Activated CD4-positive, alpha-beta T cell treated with anti-CD3 and anti-CD28 coated beads, Interleukin-2, amount 10 ng/mL, durations not matched to agents 24 days and 14 days (primary cell): ENCODE measurements at regions of chr5 and their contacts with region 1.

Region 1: GRCh38 chr5:156920042-156920860 is 42.8 kb downstream of the TIMD4 start:
- DNase-seq: peak; percentile 90
- H3K4me3 Mint-ChIP-seq: peak overlapping the region; percentile 87
- H3K27ac Mint-ChIP-seq: peak overlapping the region; percentile 96
- H3K4me1 Mint-ChIP-seq: peaks cover 61% of the 10 kb centered on the region
- H3K27me3 Mint-ChIP-seq: no peaks in the 10 kb centered on the region

Region 2: GRCh38 chr5:156402387-156402921 is 517.8 kb before region 1 on chr5:
- intact Hi-C with region 1: loop called (anchors 1 kb)
- DNase-seq: peak; percentile 82
- H3K4me3 Mint-ChIP-seq: peak overlapping the region; percentile 60
- H3K27ac Mint-ChIP-seq: peak overlapping the region; percentile 78
- H3K4me1 Mint-ChIP-seq: peaks cover 8% of the 10 kb centered on the region
- H3K27me3 Mint-ChIP-seq: peaks cover 8% of the 10 kb centered on the region

Region 3: GRCh38 chr5:156947796-156948324 is 27.6 kb after region 1 on chr5:
- intact Hi-C with region 1: loop called (anchors 1 kb)
- DNase-seq: peak; percentile 84
- H3K4me3 Mint-ChIP-seq: peak overlapping the region; percentile 11
- H3K27ac Mint-ChIP-seq: peak overlapping the region; percentile 76
- H3K4me1 Mint-ChIP-seq: peaks cover 35% of the 10 kb centered on the region
- H3K27me3 Mint-ChIP-seq: no peaks in the 10 kb centered on the region

Region 4: DNA sequence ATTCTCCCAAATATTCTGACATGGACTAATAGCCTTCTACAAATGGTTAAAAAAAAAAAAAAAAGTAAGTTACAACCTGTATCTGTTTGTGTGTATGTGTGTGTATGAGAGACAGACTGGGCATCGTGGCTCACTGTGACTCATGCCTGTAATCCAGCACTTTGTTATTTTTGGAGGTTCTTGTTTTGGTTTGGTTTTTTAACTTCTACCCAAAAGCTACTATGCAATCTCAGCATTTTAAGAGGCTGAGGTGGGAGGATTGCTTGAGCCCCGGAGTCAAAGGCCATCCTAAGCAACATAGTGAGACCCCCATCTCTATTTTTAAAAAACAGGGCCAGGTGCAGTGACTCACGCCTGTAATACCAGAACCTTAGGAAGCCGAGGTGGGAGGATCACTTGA is 156.3 kb after region 1 on chr5:
- intact Hi-C with region 1: loop called (anchors 1 kb)
- DNase-seq: peak; percentile 62
- H3K4me3 Mint-ChIP-seq: no peak overlapping the region
- H3K27ac Mint-ChIP-seq: peak overlapping the region; percentile 59
- H3K4me1 Mint-ChIP-seq: peaks cover 45% of the 10 kb centered on the region
- H3K27me3 Mint-ChIP-seq: no peaks in the 10 kb centered on the region

Region 5: GRCh38 chr5:157130925-157131324 is 210.7 kb after region 1 on chr5:
- intact Hi-C with region 1: loop called (anchors 2 kb)
- DNase-seq: peak; percentile 53
- H3K4me3 Mint-ChIP-seq: no peak overlapping the region
- H3K27ac Mint-ChIP-seq: no peak overlapping the region
- H3K4me1 Mint-ChIP-seq: peaks cover 35% of the 10 kb centered on the region
- H3K27me3 Mint-ChIP-seq: no peaks in the 10 kb centered on the region

Region 6: DNA sequence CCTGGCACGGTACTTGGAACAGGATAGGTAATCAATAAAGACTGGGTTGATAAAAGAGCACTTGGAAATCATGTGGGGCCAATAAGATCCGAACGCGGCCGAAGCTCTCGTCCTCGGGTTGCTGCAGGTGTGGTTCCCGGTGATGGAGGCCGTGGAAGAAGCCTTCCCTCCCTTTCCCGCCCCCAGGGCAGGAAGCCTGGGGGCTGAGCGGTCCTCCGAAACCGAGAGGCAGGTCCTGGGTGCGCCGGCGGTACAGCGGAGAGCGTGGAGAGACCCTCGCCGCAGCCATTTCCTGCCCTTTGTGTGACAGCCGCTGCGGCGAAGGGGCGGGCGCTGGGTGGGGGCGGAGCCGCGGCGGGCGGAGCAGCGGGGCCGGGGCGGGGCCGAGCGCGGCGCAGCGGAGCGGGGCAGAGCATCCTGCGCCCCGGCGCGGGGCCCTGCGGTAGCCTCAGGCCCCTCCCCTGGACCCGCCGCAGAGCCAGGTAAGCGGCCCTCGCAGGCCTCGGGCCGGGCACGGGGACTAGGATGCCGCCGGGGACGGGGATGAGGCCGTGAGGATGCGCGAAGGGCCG is 345.5 kb after region 1 on chr5 and contains the start of gene CYFIP2:
- intact Hi-C with region 1: loop called (anchors 5 kb)
- DNase-seq: peak; percentile 96
- H3K4me3 Mint-ChIP-seq: peak within 1 kb of the TSS; percentile 96
- H3K27ac Mint-ChIP-seq: peak within 1 kb of the TSS; percentile 98
- H3K4me1 Mint-ChIP-seq: peaks cover 68% of the 10 kb centered on the region
- H3K27me3 Mint-ChIP-seq: no peaks in the 10 kb centered on the region
- total RNA-seq, gene CYFIP2: 180 and 193 TPM in 2 replicates